ENCODE measurements at regions of chr1 and their contacts with region 1.

Region 1: DNA sequence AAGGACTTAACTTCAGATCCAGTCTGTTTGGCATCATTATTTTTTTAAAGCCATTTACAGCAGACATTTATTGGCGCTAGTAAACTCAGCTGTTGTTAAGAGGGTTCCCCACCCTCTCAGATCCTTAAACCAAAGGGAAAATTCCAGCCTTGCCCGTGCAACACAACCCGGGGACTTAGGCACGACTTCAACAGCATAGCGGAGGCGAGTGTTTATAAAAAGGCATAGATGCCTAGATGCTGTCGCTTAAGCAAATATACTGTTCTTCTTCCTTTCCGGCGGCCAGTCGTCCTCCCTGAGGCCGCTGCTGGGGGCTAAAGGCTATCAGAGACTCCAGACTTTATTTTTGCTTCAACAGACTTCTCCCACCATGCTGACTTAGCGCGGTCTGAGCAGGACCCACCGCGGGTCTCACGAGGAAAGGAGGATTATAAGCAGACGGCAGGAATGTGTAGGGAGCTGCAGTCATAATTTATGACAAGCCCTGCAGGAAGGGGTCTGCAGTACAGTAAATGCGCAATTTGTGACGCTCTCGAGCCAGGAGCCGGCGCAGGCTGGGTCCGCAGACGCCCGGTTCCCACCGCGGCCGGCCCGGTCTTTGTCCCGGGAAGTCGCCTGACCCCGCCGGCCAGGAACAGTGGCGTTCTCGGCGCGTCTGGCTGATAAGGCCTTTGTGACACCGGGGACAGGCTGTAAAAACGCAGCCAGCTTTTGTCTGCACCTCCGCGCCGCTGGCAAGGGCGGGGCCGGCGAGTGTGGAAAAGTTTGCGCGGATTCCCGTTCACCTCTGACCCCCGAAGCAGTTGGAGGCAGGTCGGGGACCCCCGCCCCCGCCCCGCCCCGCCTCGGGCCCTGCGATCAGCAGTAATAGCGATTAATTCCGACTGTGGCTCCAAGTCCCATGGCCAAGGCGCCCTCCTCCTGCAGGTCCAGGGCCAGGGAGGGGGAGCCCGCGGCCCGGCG is 61.2 kb upstream of the ARHGEF16 start:
- DNase-seq: peak; percentile 56 to 61
- H3K4me3 ChIP-seq: peak overlapping the region; percentile 32
- H3K4me3 Mint-ChIP-seq: peak overlapping the region; percentile 70
- H3K27ac Mint-ChIP-seq: peak overlapping the region; percentile 32
- H3K4me1 ChIP-seq: peaks cover 3% of the 10 kb centered on the region; the same call in 1 of the 2 replicates
- H3K4me1 Mint-ChIP-seq: no peaks in the 10 kb centered on the region
- H3K27me3 ChIP-seq: no peaks in the 10 kb centered on the region
- H3K27me3 Mint-ChIP-seq: peaks cover under 1% of the 10 kb centered on the region
- CTCF ChIP-seq: no peak

Region 2: DNA sequence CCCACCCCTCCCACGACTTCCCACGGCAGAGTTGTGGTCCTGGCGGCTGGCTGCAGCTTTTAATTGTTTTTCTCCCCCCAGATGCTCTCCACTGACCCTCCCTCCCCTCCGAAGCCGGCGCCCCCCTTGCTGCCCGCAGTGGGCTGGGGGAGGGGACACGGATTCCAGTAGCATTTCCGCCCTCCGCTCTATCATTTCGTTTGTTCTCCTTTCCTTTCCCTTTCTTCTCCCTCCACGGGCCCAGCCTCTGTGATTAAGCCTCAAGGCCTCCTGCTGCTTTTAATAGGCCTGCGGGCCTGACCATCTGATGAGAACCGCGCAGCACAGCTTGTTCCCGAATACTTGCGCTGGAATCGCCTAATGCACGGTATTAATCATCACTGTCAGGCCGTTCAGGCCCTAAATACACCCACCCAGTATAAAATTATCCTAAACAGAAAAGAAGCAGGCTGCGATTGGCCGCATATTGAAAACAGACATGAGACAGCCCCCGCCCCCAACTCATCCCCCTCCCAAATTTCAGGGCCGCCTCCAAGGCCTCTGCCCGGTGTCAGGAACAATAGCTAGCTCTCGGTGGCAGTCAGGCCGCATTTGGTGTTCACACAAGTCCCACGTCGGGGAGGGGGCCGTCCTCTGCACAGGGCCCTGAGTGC is 40.9 kb before region 1 on chr1:
- CTCF ChIA-PET with region 1: no interaction called
- POLR2A ChIA-PET with region 1: no interaction called
- intact Hi-C with region 1: loop called (anchors 5 kb)
- DNase-seq: no peak
- H3K4me3 ChIP-seq: no peak overlapping the region
- H3K4me3 Mint-ChIP-seq: no peak overlapping the region
- H3K27ac Mint-ChIP-seq: no peak overlapping the region
- H3K4me1 ChIP-seq: peaks cover 39% of the 10 kb centered on the region
- H3K4me1 Mint-ChIP-seq: no peaks in the 10 kb centered on the region
- H3K27me3 ChIP-seq: no peaks in the 10 kb centered on the region
- H3K27me3 Mint-ChIP-seq: no peaks in the 10 kb centered on the region
- CTCF ChIP-seq: no peak

Region 3: DNA sequence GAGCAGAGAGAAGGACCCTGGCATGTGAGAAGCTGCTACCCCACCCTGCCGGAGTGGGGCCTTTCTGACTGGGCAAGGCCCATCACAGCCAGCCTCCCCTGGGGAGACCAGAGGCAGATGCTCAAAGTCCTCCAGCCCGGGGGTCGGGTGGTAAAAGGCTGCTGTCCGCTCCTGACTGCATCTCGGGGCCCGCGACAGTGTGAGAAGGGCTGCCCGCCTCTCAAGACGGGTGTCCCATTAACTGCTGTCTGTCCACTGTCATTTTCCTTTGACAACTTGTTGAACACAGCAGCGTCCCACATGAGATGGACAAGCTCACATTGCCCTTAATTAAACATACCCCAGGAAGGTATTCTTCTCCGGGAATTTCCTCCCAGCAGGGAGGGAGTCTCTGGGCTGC is 30.3 kb before region 1 on chr1:
- CTCF ChIA-PET with region 1: no interaction called
- POLR2A ChIA-PET with region 1: no interaction called
- intact Hi-C with region 1: no loop called
- DNase-seq: no peak
- H3K4me3 ChIP-seq: no peak overlapping the region
- H3K4me3 Mint-ChIP-seq: no peak overlapping the region
- H3K27ac Mint-ChIP-seq: no peak overlapping the region
- H3K4me1 ChIP-seq: no peaks in the 10 kb centered on the region
- H3K4me1 Mint-ChIP-seq: no peaks in the 10 kb centered on the region
- H3K27me3 ChIP-seq: no peaks in the 10 kb centered on the region
- H3K27me3 Mint-ChIP-seq: no peaks in the 10 kb centered on the region
- CTCF ChIP-seq: no peak

Region 4: DNA sequence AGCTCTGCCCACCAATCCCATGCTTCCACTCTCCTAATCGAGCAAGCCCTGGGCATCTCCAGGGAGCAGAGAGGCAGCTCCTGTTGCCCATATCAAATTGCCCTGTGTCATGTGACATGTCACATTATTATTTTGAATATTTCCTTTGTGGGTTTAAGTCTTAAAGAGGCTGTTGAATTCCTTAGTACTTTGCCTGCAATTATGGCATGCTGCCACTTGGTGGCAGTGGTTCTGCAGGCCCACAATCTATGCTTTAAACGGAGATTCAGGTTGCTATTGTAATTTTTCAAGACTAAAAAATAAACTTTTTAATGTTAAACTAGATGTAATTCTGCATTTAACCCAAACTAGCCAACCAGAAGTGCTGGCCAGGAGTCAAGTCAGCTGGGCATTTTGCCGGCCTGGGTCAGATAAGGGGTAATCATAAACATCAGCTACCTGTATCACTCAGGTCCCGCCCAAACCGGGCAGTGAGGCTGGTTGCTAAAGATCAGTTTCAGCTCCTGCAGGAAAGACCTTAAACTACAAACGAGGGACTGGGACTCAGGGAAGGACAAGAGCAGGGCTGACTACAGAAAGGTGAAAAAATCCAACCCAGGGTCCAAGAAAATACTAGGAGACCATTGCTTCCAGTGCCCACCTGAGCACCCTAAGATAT is 23.9 kb after region 1 on chr1:
- CTCF ChIA-PET with region 1: no interaction called
- POLR2A ChIA-PET with region 1: no interaction called
- intact Hi-C with region 1: no loop called
- DNase-seq: no peak
- H3K4me3 ChIP-seq: no peak overlapping the region
- H3K4me3 Mint-ChIP-seq: no peak overlapping the region
- H3K27ac Mint-ChIP-seq: no peak overlapping the region
- H3K4me1 ChIP-seq: no peaks in the 10 kb centered on the region
- H3K4me1 Mint-ChIP-seq: no peaks in the 10 kb centered on the region
- H3K27me3 ChIP-seq: no peaks in the 10 kb centered on the region
- H3K27me3 Mint-ChIP-seq: no peaks in the 10 kb centered on the region
- CTCF ChIP-seq: peak; percentile 11 to 16

Measured in Caco-2 (cell line).